Testis (tissue), 5 donors: ENCODE measurements at regions of chr5 and their contacts with region 1.

Region 1: DNA sequence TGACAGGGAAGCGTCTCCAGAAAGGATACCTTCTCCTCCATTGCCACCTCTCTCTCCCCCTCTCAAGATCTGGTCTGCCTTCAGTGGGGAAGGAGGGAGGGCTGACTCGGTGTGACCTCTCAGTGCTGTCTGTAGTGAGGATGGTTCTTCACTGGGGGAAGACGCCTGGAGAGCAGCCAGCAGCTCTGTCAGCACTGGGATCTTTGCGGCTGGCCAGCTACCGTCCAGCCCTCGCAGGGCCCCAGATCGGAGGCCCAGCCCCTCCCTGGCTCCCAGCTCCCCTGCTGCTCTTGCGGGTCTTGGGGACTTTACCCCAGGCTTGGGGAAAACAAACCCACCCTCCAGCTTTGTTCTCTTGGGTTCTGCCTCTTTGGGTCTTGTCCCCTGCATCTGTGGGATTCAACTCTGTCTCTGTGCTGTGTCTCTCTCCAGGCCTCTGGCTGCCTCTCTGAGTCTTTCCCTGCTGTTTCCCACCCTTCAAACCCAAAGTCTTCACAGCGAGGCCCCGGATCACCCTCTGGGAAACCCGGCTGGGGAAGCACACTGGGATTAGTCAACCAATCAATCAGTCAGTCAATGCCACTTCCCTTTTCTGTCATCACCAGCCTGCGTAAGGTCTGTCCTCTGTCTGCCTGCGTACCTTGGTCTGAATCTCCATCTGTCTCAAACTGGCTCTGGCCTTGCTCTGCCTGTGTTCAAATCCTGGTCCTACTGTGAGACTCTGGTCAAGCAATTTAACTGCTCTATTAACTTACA is 23.0 kb downstream of the FGF18 start:
- DNase-seq: no peak
- H3K4me3 ChIP-seq: no peak overlapping the region
- H3K27ac ChIP-seq: no peak overlapping the region
- H3K4me1 ChIP-seq: no peaks in the 10 kb centered on the region
- H3K27me3 ChIP-seq: no peaks in the 10 kb centered on the region
- CTCF ChIP-seq: no peak
- POLR2A ChIP-seq: no peak

Region 2: DNA sequence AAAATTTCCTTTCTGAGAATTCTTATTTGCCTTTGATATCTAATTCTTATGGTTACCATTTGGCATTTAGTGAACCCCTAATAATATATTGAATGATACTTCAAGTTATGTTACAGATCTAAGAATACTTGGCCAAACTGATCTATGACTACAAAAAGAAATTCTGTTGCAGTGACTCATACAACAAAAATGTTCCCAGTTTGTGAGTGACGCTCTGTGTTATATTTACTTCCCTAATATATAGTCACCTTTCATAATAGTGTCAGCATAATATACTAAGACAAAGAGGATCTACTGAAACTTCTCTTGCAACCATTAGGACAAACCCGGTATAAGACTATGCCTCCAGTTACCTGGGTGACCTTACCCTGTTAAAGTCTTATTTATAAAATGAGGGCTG is 350.3 kb before region 1 on chr5:
- intact Hi-C with region 1: no loop called
- DNase-seq: no peak
- H3K4me3 ChIP-seq: no peak overlapping the region
- H3K27ac ChIP-seq: no peak overlapping the region
- H3K4me1 ChIP-seq: no peaks in the 10 kb centered on the region
- H3K27me3 ChIP-seq: no peaks in the 10 kb centered on the region
- CTCF ChIP-seq: no peak
- POLR2A ChIP-seq: no peak

Region 3: GRCh38 chr5:171474230-171474813 is 31.9 kb after region 1 on chr5:
- intact Hi-C with region 1: loop called (anchors 2 kb)
- DNase-seq: no peak
- H3K4me3 ChIP-seq: no peak overlapping the region
- H3K27ac ChIP-seq: no peak overlapping the region
- H3K4me1 ChIP-seq: no peaks in the 10 kb centered on the region
- H3K27me3 ChIP-seq: no peaks in the 10 kb centered on the region
- CTCF ChIP-seq: no peak
- POLR2A ChIP-seq: no peak